ENCODE measurements at regions of chr6 and their contacts with region 1.

Region 1: DNA sequence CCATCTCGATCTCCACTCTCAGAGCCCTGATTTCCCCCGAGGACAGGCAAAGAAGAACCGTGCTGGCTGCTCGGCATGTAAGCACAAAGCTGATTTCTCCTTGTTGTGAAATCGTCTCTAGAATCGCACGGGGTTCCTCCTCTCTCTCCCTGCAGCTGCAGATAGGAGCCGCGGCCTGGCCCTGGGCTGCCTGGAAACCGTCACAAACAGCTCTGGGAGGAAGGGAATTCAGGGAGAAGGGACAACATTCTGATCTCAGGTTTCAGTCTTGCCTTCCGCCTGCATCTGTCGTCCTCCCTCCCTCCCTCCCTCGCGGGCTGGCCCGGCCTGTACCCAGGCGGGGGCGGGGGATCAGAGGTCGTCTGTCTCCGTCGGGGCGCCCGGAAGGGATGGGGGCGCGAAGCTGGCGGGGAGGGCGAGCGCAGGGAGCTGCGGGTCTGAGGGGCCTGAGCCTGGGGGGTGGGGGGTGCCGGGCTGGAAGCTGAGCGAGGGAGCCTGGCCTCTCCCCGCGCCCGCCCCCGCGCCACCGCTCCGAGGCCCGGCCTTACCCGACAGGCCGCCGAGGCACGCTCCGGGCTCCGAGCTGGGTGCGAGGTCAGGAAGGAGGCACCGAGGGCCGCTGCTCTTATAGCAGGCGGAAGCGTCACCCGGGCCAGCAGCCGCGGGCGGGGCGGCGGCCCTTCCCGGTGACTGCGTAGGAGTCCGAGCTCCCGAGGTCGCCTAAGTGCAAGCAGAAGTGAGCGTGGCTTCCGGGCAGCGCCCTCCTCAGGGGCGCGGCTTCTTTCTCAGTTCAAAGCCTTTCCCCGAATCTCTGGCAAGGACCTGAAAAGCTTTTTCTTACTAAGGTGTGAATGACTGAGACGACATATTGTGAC is at the start of gene SERPINB1:
- DNase-seq: peak; percentile 87 to 94
- H3K4me3 ChIP-seq: peak within 1 kb of the TSS; percentile 64
- H3K27ac ChIP-seq: peak within 1 kb of the TSS; percentile 97
- H3K4me1 ChIP-seq: peaks cover 55% of the 10 kb centered on the region
- H3K27me3 ChIP-seq: no peaks in the 10 kb centered on the region
- CTCF ChIP-seq: no peak
- total RNA-seq, gene SERPINB1: 82.3 and 93.9 TPM in 2 replicates

Region 2: DNA sequence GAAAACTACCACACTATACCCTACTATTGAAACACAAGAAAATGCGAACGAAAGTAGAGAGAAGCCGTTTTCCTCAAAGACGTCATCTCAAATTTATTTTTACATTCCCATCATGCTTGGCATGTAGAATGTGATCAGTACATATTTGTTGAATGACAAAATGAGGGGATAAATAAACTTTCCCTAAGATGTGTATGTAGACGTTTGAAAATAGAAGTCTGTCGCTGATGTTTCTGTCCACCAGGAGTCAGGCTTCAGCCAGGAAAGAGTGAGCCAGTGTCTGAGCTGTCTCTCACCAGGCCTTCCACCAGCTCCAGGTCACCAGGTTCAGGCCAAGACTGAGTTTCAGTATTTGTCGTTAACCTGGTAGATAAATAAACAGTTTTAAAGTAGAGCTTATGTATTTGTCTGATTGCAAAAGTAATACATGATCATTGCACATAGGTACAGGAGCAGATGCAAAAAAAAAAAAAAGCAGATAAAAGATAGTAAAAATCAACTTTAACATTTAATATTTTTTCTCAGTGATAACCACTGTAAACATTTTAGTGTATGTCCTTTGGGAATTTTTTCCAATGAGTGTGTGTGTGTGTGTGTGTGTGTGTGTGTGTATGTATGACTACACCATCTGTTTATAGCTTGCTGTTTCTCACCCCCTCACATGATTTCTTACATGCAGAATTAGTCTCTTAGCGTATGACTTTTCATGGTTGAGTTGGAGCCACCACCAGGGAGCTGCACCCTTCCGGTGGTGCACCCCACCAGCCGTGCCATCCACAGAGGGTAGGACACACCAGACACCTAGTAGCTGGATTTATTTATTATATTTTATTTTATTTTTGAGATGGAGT is 50.2 kb before region 1 on chr6:
- CTCF ChIA-PET with region 1: interaction called, 14 read pairs
- POLR2A ChIA-PET with region 1: interaction called, 8 read pairs
- intact Hi-C with region 1: loop called (anchors 1 kb)
- DNase-seq: peak; percentile 71
- H3K4me3 ChIP-seq: no peak overlapping the region
- H3K27ac ChIP-seq: peak overlapping the region; percentile 74
- H3K4me1 ChIP-seq: peaks cover 4% of the 10 kb centered on the region; the same call in 1 of the 2 replicates
- H3K27me3 ChIP-seq: no peaks in the 10 kb centered on the region
- CTCF ChIP-seq: peak; percentile 80

Region 3: DNA sequence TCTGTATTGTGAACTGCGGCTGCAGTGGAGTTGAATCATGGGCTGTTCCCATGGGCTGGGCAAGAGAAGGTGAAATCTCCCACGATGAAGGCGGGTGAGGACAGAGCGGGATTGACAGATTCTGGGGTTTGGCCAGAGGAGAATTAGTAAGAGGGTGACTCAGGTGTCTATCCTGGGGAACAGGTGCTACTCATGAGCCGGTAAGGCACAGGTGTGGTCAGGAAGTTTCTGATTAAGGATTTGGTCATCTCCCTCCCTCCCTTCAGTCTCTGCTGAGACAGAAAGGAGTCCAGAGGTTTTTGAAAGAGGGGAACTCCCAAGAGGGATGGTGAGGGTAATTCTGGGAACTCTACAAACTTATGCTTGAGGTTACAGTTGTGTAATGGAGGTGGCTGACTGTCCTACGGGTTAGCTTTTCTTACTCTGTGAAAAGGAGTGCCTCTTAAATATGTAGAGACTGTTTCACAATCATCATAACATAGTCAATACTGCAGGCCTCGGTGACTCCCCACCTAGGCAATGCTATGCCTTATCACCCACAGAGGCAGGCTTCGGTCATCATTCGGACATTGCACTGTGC is 31.3 kb before region 1 on chr6:
- CTCF ChIA-PET with region 1: no interaction called
- POLR2A ChIA-PET with region 1: interaction called, 6 read pairs
- intact Hi-C with region 1: loop called (anchors 1 kb)
- DNase-seq: peak; percentile 82 to 99
- H3K4me3 ChIP-seq: peak overlapping the region; percentile 19; the same call in 1 of the 2 replicates
- H3K27ac ChIP-seq: peak overlapping the region; percentile 99
- H3K4me1 ChIP-seq: peaks cover 37% of the 10 kb centered on the region
- H3K27me3 ChIP-seq: no peaks in the 10 kb centered on the region
- CTCF ChIP-seq: no peak

Region 4: GRCh38 chr6:2818593-2818992 is 22.9 kb before region 1 on chr6:
- CTCF ChIA-PET with region 1: no interaction called
- POLR2A ChIA-PET with region 1: interaction called, 12 read pairs
- intact Hi-C with region 1: loop called (anchors 1 kb)
- DNase-seq: peak in 1 of 2 experiments; percentile 67
- H3K4me3 ChIP-seq: peak overlapping the region; percentile 34; the same call in 1 of the 2 replicates
- H3K27ac ChIP-seq: peak overlapping the region; percentile 98
- H3K4me1 ChIP-seq: peaks cover 40% of the 10 kb centered on the region
- H3K27me3 ChIP-seq: no peaks in the 10 kb centered on the region
- CTCF ChIP-seq: no peak

Region 5: DNA sequence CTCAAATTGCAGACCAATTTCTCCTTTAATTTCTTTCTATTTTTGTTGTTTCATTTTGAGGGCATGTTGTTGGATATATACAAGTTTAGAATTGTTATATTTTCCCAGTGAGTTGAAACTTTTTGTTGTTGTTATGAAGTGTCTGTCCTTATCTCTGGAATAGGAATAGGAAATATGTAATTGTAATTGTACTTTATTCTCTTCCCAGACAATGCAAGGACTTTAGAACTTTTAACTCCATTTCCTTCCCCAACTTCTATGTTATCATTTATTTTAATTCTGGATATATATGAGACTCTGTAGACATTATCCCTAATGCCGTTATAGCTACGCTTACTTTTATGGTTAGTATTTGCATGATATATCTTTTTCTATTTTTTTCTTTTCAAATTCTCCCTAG is 12.2 kb before region 1 on chr6:
- CTCF ChIA-PET with region 1: no interaction called
- POLR2A ChIA-PET with region 1: interaction called, 11 read pairs
- intact Hi-C with region 1: no loop called
- DNase-seq: no peak
- H3K4me3 ChIP-seq: no peak overlapping the region
- H3K27ac ChIP-seq: no peak overlapping the region
- H3K4me1 ChIP-seq: no peaks in the 10 kb centered on the region
- H3K27me3 ChIP-seq: no peaks in the 10 kb centered on the region
- CTCF ChIP-seq: no peak

Region 6: DNA sequence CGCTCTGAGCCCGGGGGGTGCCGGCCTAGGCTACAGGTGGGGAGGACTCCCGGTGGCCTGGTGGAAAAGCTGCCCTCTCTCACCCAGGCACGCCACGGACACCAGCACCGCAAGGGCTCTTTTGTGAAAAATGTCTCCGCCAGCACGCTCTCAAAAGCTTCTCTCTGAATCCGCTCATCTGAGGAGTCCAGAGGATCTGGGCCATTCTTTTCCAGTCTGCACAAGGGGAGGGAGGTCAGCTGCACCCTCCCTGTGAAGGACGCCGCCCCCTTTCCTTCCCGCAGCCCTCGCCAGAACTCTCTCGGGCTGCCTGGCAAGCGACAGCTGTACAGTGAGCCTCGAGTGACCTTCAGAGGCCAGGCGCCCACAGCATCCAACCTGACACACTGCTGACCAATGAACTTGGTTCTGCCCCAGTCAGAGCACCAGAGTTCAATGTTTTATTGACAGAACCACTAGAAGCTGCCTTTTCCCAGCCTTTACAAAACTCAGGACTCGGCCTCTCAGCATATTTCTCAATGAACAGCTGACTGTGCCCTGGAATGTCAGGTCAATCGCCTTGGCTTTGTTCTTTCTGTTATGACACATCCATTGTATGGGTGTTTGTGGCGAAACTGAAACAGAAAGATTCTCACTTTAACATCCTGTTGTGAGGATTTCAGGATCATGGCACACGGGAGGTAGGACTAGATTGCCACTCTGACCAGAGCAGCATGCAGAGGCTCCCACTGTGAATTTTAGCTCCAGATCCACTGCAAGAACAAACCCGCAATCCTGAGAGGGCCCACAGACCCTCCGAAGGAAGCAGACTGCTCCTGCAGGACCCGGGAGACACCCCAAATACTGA is 34.9 kb after region 1 on chr6:
- CTCF ChIA-PET with region 1: interaction called, 5 read pairs
- POLR2A ChIA-PET with region 1: interaction called, 11 read pairs
- intact Hi-C with region 1: no loop called
- DNase-seq: peak; percentile 63 to 92
- H3K4me3 ChIP-seq: peak overlapping the region; percentile 49; the same call in 1 of the 2 replicates
- H3K27ac ChIP-seq: peak overlapping the region; percentile 99
- H3K4me1 ChIP-seq: peaks cover 30% of the 10 kb centered on the region
- H3K27me3 ChIP-seq: no peaks in the 10 kb centered on the region
- CTCF ChIP-seq: no peak

Region 7: GRCh38 chr6:3068329-3069214 is 227.1 kb after region 1 on chr6 and contains the start of gene RIPK1:
- CTCF ChIA-PET with region 1: no interaction called
- POLR2A ChIA-PET with region 1: interaction called, 10 read pairs
- intact Hi-C with region 1: no loop called
- DNase-seq: peak; percentile 70 to 93
- H3K4me3 ChIP-seq: peak within 1 kb of the TSS; percentile 89
- H3K27ac ChIP-seq: peak within 1 kb of the TSS; percentile 83
- H3K4me1 ChIP-seq: peaks cover 11% of the 10 kb centered on the region
- H3K27me3 ChIP-seq: no peaks in the 10 kb centered on the region
- CTCF ChIP-seq: no peak
- total RNA-seq, gene RIPK1: 13.9 and 14.8 TPM in 2 replicates

Region 8: DNA sequence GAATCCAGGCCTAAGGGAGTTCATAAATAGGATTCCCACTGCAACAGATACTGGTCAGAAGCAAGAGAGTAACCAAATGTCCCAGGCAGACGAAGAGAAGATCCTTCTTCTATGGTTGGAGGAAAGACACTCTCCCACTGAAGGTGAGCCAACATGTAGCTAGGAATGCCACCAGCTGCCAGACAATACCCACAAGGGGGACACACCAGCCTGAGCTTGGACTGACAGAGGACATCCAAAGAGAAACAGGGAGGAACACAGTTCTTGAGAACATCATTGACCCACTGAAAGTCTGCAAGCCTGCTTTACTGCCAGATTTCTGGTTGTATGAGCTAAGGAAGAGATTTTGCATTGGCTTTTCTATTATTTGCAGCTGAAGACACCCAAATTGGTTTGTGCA is 829.9 kb after region 1 on chr6:
- CTCF ChIA-PET with region 1: no interaction called
- POLR2A ChIA-PET with region 1: no interaction called
- intact Hi-C with region 1: no loop called
- DNase-seq: no peak
- H3K4me3 ChIP-seq: no peak overlapping the region
- H3K27ac ChIP-seq: no peak overlapping the region
- H3K4me1 ChIP-seq: no peaks in the 10 kb centered on the region
- H3K27me3 ChIP-seq: no peaks in the 10 kb centered on the region
- CTCF ChIP-seq: no peak